GM10248 (cell line): ENCODE measurements at regions of chr17 and their contacts with region 1.

Region 1: DNA sequence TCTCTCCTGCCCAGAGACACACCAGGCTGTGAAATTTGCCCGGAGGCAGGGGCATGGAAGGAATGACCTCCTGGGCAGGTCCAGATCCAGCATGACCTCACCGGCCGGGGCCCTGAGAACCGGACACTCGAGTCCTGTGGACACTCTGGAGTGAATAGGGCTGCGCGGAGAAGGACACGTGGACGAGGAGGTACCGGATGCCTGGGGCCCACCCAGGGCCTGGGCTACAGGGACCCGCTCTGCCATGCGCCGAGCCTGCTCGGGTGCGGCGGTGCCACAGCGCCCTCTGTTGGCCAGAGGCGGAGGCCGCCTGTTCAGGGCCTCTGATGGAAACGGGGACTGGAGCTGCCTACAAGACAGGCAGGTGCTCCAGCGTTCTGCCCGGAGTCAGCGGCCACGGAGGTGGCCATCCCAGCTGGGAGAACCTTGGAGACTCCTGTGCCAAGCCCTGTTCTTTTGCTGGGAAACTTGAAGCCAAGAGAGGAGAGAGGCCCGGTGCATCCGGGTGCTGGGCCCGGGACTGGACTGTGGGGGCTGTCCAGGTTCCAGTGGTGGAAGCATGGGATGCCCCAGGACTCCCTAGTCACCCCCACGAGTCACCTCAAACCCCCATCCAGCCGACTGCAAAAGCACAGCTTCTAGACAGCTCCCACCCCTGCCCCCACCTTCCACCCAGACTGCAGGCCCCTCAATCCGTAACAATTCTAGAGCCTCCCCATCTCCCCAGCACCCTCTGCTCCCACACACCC is 19.3 kb upstream of the NXPH3 start:
- DNase-seq: peak; percentile 92
- CTCF ChIP-seq: peak; percentile 95

Region 2: DNA sequence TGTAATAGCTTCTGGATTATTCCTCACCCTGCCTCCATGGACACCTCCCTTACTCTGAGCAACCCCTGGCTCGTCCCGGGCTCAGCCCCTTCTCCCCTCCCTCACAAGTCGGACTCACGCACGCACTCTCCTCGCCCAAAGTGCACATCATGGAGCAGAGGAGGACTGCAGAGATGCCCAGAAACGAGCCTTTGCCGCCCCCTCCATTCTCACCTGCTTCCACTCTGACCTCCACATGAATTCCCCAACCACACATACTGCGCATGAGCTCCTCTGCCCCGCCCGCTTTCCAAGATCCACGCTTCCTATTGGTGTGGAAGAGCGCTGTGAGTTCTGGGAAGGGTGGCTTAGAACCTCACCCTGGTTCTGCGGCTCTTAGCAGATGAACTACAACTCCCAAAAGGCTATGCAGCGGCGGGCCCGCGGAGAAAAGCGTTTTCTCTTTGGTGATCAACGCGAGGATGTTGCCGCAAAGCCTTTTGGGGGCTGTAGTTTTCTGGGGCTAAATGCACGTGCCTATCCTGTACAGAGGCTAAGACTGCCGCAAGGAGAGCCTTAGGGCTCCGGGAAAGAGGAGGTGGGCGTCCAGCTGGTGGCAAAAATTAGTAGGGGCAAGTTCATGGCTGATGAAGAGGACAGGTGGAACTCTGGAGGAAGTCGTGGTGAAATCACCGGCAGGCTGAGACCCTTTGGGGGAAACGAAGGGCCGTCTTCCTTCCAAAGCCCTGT is 141.6 kb before region 1 on chr17 and contains the start of gene PHB1:
- CTCF ChIA-PET with region 1: interaction called, 220 read pairs
- POLR2A ChIA-PET with region 1: no interaction called
- DNase-seq: peak; percentile 97
- CTCF ChIP-seq: no peak

Region 3: DNA sequence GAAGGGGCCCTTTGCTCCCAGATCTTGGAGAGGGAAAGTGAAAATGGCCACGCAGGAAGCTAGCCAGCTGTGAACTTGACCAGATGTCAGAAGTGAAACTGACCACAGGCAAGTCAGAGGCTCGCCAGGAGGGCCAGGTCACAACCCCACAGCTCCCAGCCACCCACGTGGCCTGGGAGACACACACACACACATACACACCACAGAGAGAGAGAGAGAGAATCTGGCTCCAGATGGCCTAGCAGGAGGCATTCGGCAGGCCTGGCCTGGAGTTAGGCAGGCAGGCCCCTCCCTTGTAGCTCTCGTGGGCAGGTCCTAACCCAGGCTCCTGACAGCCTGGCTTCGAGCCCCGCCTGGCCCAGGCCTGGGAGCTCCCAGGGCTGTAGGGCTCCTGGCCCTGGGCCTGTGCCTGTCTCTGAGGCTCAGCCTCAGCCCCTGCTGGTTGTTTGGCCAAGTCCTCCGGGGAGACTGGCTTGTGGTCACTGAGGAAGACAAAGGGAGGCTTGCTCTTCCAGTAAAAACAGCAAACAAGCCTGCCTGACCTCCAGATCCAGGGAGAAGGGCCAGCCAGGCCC is 41.1 kb before region 1 on chr17:
- CTCF ChIA-PET with region 1: interaction called, 70 read pairs
- POLR2A ChIA-PET with region 1: no interaction called
- DNase-seq: peak; percentile 88
- CTCF ChIP-seq: no peak

Region 4: DNA sequence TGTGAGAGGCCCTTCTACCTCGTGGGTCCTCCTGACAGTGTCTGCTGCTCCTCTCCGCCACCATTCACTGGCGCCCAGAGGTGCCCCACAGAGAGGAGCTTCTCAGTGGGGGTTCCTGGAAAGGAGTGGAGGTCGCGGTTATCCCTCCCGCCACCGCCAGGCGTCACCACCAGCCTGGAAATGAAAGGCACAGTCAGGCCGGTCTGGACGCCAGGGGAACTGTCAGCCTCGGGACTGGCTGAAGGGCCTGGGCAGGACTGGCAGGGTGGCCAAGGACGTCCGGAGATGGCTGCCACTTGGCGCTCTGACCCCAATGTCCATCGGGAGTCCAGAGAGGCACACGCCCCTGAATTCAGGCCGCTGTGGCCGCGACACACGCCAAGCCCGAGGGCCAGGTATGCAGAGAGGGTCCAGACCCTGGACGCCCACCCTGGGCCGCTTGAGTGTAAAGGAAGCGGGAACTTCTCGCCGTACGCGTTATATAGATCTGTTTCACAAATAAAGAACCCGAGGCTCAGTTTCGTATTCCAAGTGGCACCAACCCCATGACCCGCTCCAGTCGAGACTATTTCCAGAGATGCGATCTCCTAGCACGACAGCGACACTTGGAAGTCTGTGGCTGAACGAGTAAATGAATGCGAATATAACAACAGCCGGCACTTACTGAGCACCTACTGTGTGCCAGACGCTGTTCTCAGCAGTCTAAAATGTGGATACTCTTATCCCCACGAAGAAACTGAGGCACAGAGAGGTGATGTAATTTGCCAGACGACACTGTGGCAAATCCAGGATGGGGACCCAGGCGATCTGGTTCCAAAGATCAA is 11.7 kb after region 1 on chr17:
- CTCF ChIA-PET with region 1: interaction called, 34 read pairs
- POLR2A ChIA-PET with region 1: no interaction called
- DNase-seq: peak; percentile 83
- CTCF ChIP-seq: peak; percentile 98

Region 5: DNA sequence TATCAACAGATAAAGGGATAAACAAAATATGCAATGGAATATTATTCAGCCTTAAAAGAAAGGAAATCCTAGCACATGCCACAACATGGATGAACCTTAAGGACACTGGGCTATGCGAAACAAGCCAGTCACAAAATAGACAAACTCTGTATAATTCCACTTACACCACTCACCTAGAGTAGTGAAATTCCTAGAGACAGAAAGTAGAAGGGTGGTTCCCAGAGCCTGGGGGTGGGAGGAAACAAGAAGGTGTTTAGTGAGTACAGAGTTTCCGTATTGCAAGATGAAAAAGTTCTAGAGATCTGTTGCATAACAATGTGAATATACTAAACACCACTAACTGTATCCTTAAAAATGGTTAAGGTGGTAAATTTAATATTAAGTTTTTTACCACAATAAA is 111.5 kb after region 1 on chr17:
- CTCF ChIA-PET with region 1: no interaction called
- POLR2A ChIA-PET with region 1: no interaction called
- DNase-seq: no peak
- CTCF ChIP-seq: no peak

Region 6: DNA sequence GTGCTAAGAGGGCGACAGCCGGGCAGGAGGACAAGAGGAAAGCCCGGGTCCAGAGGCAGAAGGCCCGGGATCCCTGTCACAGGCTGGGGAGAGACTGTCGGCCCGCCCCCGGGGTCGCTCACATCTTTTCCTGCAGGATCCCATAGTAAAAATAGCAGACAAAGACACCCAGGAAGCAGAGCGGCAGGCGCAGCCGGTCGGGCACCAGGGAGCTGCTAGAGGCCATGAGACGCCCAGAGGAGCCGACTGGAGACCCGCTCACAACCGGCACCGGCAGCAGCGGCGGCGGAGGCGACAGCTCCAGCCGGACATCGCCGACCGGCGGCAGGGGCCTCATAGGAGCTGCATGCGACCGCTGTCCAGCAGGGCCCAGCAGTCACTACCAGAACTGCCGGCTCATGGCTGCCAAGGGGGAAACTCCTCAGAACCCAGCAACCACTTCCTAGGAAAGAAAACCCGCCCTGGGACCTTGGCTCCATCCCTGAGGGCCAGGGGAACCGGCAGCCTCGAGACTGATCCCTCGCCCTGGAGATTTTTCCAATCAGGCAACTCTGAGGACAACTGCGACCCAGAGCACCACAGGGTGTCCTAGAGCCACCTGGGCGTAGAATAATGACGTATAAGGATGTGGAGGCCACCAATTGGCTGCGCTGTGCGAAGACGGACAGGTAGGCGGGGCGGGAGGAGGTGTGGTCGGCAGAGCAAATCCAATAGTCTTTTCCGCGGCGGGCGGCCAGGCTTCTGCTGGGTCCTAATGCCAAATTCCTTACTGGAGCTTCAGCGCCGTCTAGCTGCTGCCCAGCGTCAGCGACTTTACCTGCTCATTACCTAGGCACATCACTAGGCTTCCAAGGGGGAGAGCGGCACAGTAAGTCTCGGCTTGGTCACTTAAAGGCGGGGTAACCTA is 151.5 kb after region 1 on chr17 and contains the start of gene SLC35B1:
- CTCF ChIA-PET with region 1: interaction called, 38 read pairs
- POLR2A ChIA-PET with region 1: no interaction called
- DNase-seq: peak; percentile 99
- CTCF ChIP-seq: peak; percentile 94

Region 7: GRCh38 chr17:49952209-49952911 is 396.0 kb after region 1 on chr17:
- CTCF ChIA-PET with region 1: interaction called, 14 read pairs
- POLR2A ChIA-PET with region 1: no interaction called
- DNase-seq: peak; percentile 85
- CTCF ChIP-seq: peak; percentile 98

Region 8: GRCh38 chr17:50312308-50312707 is 755.9 kb after region 1 on chr17:
- CTCF ChIA-PET with region 1: no interaction called
- POLR2A ChIA-PET with region 1: no interaction called
- DNase-seq: no peak
- CTCF ChIP-seq: no peak